HEK293 (cell line): ENCODE measurements at regions of chr11 and their contacts with region 1.

Region 1: DNA sequence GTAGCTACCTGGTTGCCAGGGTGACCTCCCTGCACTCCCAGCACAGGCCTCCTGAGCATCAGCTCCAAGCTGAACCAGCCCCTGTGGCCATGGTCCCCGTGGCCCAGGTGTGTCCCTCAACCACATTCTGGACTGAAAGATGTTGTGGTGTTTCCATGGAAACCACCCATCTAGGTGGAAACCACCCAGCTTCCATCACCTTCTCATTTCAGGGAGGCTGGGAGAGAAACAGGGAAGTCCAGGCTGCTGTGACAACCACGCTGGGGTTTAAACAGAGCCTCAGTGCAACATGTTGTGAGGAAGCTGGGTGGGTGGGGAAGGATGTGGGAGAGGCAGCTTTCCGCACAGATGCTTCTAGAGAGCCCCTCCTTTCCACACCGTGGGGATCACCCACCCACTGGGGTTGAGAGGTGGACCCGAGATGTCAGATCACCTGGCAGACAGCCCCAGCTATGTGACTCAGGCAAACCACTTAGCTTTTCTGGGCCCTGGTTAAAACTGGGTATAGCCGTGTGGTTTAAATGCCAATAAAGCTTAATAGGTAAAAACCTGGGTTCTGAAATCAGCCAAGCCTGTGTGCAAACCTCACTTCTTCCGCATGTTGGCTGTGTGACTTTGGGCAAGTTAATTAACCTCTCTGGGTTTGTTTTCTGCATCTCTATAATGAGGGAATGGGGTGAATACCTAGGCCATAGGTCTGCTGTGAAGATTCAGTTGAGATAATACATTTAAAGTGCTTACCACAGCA is 46.4 kb downstream of the CD82 start:
- H3K4me3 ChIP-seq: no peak overlapping the region
- H3K27ac ChIP-seq: no peak overlapping the region
- H3K4me1 ChIP-seq: peaks cover 7% of the 10 kb centered on the region
- CTCF ChIP-seq: no peak

Region 2: GRCh38 chr11:44110231-44110679 is 501.6 kb before region 1 on chr11:
- CTCF ChIA-PET with region 1: interaction called, 10 read pairs
- POLR2A ChIA-PET with region 1: no interaction called
- H3K4me3 ChIP-seq: no peak overlapping the region
- H3K27ac ChIP-seq: no peak overlapping the region
- H3K4me1 ChIP-seq: no peaks in the 10 kb centered on the region
- CTCF ChIP-seq: 0 out of 2 replicates have a peak, but pooled peaks have one; percentile 27

Region 3: GRCh38 chr11:44556735-44557409 is 55.0 kb before region 1 on chr11:
- CTCF ChIA-PET with region 1: interaction called, 275 read pairs
- POLR2A ChIA-PET with region 1: interaction called, 9 read pairs
- H3K4me3 ChIP-seq: no peak overlapping the region
- H3K27ac ChIP-seq: no peak overlapping the region
- H3K4me1 ChIP-seq: no peaks in the 10 kb centered on the region
- CTCF ChIP-seq: peak; percentile 60